Left colon (tissue), 2 donors: ENCODE measurements at regions of chr18 and their contacts with region 1.

Region 1: GRCh38 chr18:47756364-47757016 is 174.0 kb downstream of the SMAD2 start:
- DNase-seq: peak in 1 of 2 donors; percentile 69
- ATAC-seq: peak; percentile 74

Region 2: DNA sequence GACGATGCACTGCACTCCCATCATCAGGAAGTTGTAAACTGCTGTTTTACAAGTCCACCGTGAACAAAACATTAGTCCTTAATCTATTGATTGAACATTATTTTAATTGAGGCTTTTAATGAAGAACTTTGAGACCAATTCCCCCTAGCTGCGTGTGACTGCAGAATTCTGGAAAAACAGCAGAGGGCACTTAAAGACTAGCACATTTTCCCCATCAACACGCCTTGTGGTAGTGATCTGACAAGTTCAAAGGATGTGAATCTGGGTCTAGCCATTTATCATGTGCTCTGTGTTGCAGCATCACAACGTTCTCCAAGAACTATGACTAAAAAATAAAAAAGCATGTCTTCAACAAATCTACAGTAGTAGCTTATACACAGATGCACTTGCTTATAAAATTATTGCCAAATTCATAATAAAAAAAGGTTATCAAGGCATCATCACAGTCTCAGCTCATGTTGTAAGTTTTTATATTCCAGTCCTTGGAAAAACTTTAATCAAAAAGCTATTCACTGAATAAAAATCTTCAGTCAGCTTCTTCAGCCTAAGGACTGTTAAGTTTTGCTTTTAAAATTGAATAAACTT is 540.8 kb before region 1 on chr18:
- intact Hi-C with region 1: loop called in 1 of 2 experiments (anchors 10 kb)
- DNase-seq: no peak
- ATAC-seq: peak; percentile 57

Region 3: GRCh38 chr18:47574966-47575365 is 181.5 kb before region 1 on chr18:
- intact Hi-C with region 1: no loop called
- DNase-seq: no peak
- ATAC-seq: peak; percentile 68

Region 4: GRCh38 chr18:48167897-48168253 is 411.4 kb after region 1 on chr18:
- intact Hi-C with region 1: no loop called
- DNase-seq: peak; percentile 90 to 92
- ATAC-seq: peak; percentile 83